ENCODE measurements at regions of chr11 and their contacts with region 1.

Region 1: GRCh38 chr11:27698872-27699474 is 1.3 kb downstream of the BDNF start:
- DNase-seq: peak; percentile 87
- ATAC-seq: peak; percentile 87
- H3K4me3 Mint-ChIP-seq: no peak overlapping the region
- H3K27ac Mint-ChIP-seq: no peak overlapping the region
- H3K4me1 Mint-ChIP-seq: peaks cover 25% of the 10 kb centered on the region
- H3K27me3 Mint-ChIP-seq: peaks cover 64% of the 10 kb centered on the region

Region 2: GRCh38 chr11:27717377-27717776 is 18.4 kb after region 1 on chr11:
- CTCF ChIA-PET with region 1: interaction called, 4 read pairs
- POLR2A ChIA-PET with region 1: no interaction called
- intact Hi-C with region 1: loop called in 1 of 2 experiments (anchors 1 kb)
- DNase-seq: no peak
- ATAC-seq: no peak
- H3K4me3 Mint-ChIP-seq: no peak overlapping the region
- H3K27ac Mint-ChIP-seq: no peak overlapping the region
- H3K4me1 Mint-ChIP-seq: peaks cover 4% of the 10 kb centered on the region
- H3K27me3 Mint-ChIP-seq: peaks cover 47% of the 10 kb centered on the region

Region 3: GRCh38 chr11:28529540-28530410 is 830.8 kb after region 1 on chr11:
- CTCF ChIA-PET with region 1: interaction called, 17 read pairs
- POLR2A ChIA-PET with region 1: no interaction called
- intact Hi-C with region 1: loop called (anchors 1 to 2 kb)
- DNase-seq: no peak
- ATAC-seq: no peak
- H3K4me3 Mint-ChIP-seq: no peak overlapping the region
- H3K27ac Mint-ChIP-seq: no peak overlapping the region
- H3K4me1 Mint-ChIP-seq: no peaks in the 10 kb centered on the region
- H3K27me3 Mint-ChIP-seq: no peaks in the 10 kb centered on the region

Region 4: DNA sequence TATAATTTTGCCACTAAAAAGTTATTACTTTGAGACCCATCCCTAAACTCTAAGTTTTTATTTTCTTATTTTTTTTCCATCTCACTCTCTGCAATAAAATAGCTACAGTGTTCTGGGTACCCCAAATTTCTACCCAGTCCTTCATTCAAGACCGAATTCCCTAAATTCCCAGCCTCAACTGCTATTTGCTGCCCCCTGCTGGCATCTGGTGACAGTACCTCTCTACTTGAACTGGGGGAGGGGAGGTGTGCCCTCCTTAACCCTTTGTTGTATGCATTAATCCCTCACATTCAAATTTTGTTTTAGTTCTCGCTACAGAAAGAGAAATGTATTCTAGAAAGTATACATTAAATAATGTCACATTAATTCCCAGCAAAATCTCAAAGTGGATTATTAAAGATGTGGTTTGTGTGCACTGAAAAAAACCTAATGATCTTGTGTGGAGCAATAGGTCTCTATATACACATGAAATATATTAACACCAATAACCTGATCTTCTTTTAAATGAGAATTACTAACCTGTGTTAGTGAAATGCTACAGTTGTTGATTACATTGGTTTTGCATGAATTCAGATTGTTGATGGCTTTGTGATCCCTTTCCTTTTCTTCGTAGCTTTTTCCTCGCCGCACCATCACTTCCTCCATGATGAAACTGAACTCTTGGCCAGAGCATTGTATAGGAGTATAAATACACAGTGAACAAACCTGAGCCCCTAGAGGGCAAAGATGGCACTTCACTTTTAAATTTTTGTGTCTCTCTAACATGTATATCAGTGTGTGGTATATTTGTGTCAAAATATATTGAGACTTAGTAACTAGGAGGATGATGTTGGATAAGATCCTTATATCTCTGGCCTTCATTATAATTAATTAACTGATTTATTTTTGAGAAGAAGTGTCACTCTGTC is 999.2 kb after region 1 on chr11:
- CTCF ChIA-PET with region 1: interaction called, 3 read pairs
- POLR2A ChIA-PET with region 1: no interaction called
- intact Hi-C with region 1: loop called (anchors 1 to 5 kb)
- DNase-seq: peak; percentile 59
- ATAC-seq: no peak
- H3K4me3 Mint-ChIP-seq: no peak overlapping the region
- H3K27ac Mint-ChIP-seq: no peak overlapping the region
- H3K4me1 Mint-ChIP-seq: no peaks in the 10 kb centered on the region
- H3K27me3 Mint-ChIP-seq: peaks cover 2% of the 10 kb centered on the region

Region 5: GRCh38 chr11:29159552-29160465 is 1460.8 kb after region 1 on chr11:
- CTCF ChIA-PET with region 1: interaction called, 5 read pairs
- POLR2A ChIA-PET with region 1: no interaction called
- intact Hi-C with region 1: loop called in 1 of 2 experiments (anchors 2 kb)
- DNase-seq: peak; percentile 11
- ATAC-seq: no peak
- H3K4me3 Mint-ChIP-seq: no peak overlapping the region
- H3K27ac Mint-ChIP-seq: no peak overlapping the region
- H3K4me1 Mint-ChIP-seq: no peaks in the 10 kb centered on the region
- H3K27me3 Mint-ChIP-seq: no peaks in the 10 kb centered on the region

Region 6: GRCh38 chr11:29333993-29334775 is 1635.2 kb after region 1 on chr11:
- CTCF ChIA-PET with region 1: interaction called, 3 read pairs
- POLR2A ChIA-PET with region 1: no interaction called
- intact Hi-C with region 1: loop called in 1 of 2 experiments (anchors 2 kb)
- DNase-seq: no peak
- ATAC-seq: no peak
- H3K4me3 Mint-ChIP-seq: no peak overlapping the region
- H3K27ac Mint-ChIP-seq: no peak overlapping the region
- H3K4me1 Mint-ChIP-seq: no peaks in the 10 kb centered on the region
- H3K27me3 Mint-ChIP-seq: no peaks in the 10 kb centered on the region